ENCODE measurements at regions of chr10 and their contacts with region 1.

Region 1: DNA sequence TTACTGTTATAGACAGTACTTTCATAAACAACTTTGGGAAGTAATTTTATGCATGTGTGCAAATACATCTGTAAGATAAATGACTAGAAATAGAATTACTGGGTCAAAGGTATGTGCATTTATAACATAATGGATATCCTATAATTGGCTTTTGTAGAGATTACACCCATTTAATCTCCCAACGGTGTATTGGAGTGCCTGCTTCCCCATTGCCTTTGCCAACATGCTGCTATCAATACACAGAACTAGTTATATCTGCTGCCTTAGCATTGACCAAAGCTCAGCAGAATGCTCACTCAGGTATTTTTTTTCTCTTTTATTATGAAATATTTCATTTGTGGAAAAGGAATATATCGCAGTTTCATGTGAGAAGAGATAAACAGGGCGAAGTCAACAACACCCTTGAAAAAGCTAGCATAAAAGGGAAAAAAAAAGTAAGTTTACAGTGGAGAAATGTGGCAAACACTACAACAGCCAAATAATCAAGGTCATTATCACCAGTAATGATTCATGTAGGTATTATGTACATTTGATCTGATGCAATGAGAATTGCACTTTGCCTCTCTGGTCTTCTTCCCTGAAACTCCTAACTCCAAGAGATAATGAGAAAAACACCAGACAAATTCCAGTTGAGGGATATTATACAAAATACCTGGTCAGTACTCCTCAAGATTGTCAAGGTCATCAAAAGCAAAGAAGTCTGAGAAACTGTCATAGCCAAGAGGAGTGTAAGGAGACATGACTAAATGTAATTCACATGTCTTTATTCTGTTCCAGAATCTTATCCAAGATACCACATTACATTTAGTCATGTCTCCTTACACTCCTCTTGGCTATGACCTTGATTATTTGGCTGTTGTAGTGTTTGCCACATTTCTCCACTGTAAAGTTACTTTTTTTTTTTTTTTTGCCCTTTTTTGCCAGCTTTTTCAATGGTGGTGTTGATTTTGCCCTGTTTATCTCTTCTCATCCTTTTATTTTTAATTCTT is 36.8 kb downstream of the MARCHF5 start:
- DNase-seq: no peak
- ATAC-seq: no peak
- H3K4me3 Mint-ChIP-seq: no peak overlapping the region
- H3K27ac Mint-ChIP-seq: no peak overlapping the region
- H3K4me1 Mint-ChIP-seq: peaks cover 24% of the 10 kb centered on the region
- H3K27me3 Mint-ChIP-seq: no peaks in the 10 kb centered on the region

Region 2: DNA sequence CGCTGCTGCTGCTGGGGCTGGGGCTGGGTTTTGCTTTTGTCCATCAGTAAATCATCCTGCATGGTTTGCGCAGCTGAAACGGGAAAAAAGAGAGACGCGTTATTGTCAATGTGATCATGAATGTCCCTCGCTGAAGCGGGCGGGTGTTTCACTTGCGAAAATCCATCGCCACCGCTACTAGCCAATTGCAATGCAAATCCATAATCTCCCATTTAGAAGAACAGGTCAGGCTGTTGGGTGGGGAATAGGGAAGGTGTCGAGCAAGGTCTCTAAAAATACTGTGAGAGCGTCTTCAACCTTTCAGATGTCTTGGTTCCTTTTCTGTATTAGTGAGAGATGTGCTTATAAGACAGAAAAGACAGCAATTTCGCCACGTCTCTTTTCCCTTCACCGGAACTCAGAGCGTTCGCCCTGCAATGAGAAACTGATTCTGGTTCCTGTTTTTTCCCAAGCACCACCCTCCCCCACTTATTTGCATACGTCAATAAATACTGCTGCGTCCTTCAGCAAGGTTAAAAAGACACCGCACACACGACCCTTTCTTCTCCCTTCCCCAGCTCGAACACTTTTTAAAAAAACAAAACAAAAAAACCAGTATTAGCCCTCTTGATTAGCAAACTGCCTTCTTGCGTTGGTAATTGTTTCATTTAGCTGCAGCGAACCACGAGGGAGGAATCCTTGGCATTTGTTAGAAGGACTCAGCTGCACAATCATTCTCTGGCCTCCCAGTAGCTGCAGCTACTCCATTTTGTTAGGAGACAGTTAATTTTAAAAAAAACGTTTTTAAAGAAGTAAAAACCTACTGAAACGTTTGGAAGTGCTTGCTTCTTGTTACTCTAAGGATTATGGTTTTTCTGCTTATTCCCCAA is 87.2 kb before region 1 on chr10:
- CTCF ChIA-PET with region 1: no interaction called
- POLR2A ChIA-PET with region 1: no interaction called
- intact Hi-C with region 1: no loop called
- DNase-seq: peak; percentile 33
- ATAC-seq: peak; percentile 28
- H3K4me3 Mint-ChIP-seq: peak overlapping the region; percentile 72
- H3K27ac Mint-ChIP-seq: peak overlapping the region; percentile 2
- H3K4me1 Mint-ChIP-seq: peaks cover 30% of the 10 kb centered on the region
- H3K27me3 Mint-ChIP-seq: peaks cover 14% of the 10 kb centered on the region

Region 3: GRCh38 chr10:92309273-92309672 is 18.5 kb before region 1 on chr10:
- CTCF ChIA-PET with region 1: no interaction called
- POLR2A ChIA-PET with region 1: no interaction called
- intact Hi-C with region 1: loop called in 1 of 2 experiments (anchors 2 kb)
- DNase-seq: no peak
- ATAC-seq: no peak
- H3K4me3 Mint-ChIP-seq: no peak overlapping the region
- H3K27ac Mint-ChIP-seq: no peak overlapping the region
- H3K4me1 Mint-ChIP-seq: peaks cover 16% of the 10 kb centered on the region
- H3K27me3 Mint-ChIP-seq: no peaks in the 10 kb centered on the region

Region 4: DNA sequence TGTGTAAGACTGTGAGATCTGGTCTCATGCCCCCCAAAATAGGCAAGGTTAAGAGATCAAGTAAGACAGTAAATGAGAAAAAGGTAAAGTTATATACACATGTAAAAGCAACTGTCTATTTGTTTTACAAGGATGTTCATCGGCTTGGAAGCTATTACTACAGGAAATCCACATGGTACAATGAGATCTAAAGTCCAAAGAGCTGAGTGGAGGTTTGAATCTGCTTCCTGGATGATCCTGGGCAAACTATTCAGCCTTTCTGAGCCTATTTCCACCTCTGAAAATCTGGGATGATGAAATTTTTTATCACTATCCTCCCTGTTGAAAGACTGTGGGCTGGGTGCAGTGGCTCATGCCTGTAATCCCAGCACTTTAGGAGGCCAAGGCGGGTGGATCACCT is 123.2 kb after region 1 on chr10:
- CTCF ChIA-PET with region 1: no interaction called
- POLR2A ChIA-PET with region 1: no interaction called
- intact Hi-C with region 1: no loop called
- DNase-seq: no peak
- ATAC-seq: no peak
- H3K4me3 Mint-ChIP-seq: no peak overlapping the region
- H3K27ac Mint-ChIP-seq: no peak overlapping the region
- H3K4me1 Mint-ChIP-seq: no peaks in the 10 kb centered on the region
- H3K27me3 Mint-ChIP-seq: no peaks in the 10 kb centered on the region